ENCODE measurements at regions of chr4 and their contacts with region 1.

Region 1: DNA sequence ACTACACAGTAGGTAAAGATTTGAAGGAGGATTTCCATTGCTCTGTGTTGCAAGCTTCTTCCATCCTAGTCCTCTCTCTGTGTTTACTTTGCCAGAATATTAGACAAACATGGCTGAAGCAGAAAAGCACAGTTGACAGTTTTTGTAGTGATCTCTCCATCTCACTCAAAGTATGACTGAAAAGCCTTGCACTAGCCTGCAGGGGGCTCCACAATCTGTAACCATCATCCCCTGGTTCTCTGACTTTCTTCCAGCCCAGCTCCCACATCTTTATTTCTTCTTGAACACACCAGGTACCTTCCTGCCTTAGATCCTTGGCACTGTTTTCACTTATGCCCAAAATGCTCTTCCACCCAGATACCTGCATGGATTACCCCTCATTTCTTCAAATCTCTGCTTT is 34.1 kb upstream of the HHIP start:
- DNase-seq: peak; percentile 1 to 52
- H3K4me3 ChIP-seq: no peak overlapping the region
- H3K27ac ChIP-seq: no peak overlapping the region
- H3K4me1 ChIP-seq: no peaks in the 10 kb centered on the region
- H3K27me3 ChIP-seq: no peaks in the 10 kb centered on the region
- CTCF ChIP-seq: peak; percentile 33 to 81 (median 60)
- EP300 ChIP-seq: no peak
- POLR2A ChIP-seq: no peak
- RAD21 ChIP-seq: peak; percentile 69 to 70

Region 2: GRCh38 chr4:144583658-144584057 is 28.2 kb before region 1 on chr4:
- CTCF ChIA-PET with region 1: interaction called, 13 read pairs
- POLR2A ChIA-PET with region 1: no interaction called
- DNase-seq: no peak
- H3K4me3 ChIP-seq: no peak overlapping the region
- H3K27ac ChIP-seq: no peak overlapping the region
- H3K4me1 ChIP-seq: no peaks in the 10 kb centered on the region
- H3K27me3 ChIP-seq: no peaks in the 10 kb centered on the region
- CTCF ChIP-seq: no peak
- EP300 ChIP-seq: no peak
- POLR2A ChIP-seq: no peak
- RAD21 ChIP-seq: no peak

Region 3: GRCh38 chr4:144599621-144600020 is 12.2 kb before region 1 on chr4:
- CTCF ChIA-PET with region 1: interaction called, 12 read pairs
- POLR2A ChIA-PET with region 1: no interaction called
- DNase-seq: no peak
- H3K4me3 ChIP-seq: no peak overlapping the region
- H3K27ac ChIP-seq: no peak overlapping the region
- H3K4me1 ChIP-seq: no peaks in the 10 kb centered on the region
- H3K27me3 ChIP-seq: no peaks in the 10 kb centered on the region
- CTCF ChIP-seq: no peak
- EP300 ChIP-seq: no peak
- POLR2A ChIP-seq: no peak
- RAD21 ChIP-seq: no peak

Measured in H1 (cell line).